Kidney (tissue), 22 donors: ENCODE measurements at regions of chr6 and their contacts with region 1.

Region 1: DNA sequence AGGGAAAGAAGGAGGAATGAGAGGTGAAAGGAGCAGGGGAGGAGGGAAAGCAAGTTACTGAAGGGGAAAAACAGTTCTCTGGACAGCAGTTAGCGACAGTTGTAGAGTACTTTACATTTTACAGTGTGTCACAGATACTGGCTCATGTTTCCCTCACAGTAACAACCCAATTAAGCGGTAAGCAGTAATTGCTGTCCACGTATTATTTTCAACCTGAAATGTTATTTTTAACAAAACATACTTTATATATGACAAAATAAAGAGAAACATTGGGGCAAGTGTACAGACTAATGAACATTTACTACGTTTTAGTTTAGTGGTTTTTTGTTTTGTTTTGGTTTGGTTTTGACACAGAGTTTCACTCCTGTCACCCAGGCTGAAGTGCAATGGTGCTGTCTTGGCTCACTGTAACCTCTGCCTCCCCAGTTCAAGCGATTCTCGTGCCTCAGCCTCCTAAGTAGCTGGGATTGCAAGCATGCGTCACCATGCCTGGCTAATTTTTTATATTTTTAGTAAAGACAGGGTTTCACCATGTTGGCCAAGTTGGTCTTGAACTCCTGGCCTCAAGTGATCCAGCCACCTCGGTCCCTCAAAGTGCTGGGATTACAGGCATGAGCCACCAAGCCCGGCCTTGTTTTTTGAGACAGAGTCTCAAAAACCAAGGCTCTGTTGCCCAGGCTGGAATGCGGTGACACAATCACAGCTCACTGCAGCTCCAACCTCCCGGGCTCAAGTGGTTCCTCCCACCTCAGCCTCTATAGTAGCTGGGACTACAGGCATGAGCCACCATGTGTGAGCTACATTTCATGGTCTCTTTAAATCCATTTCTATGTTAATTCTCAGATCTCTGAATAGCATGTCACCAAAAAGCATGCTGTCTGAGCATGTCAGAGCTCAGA is 22.6 kb upstream of the BTN3A2 start:
- DNase-seq: peak in 1 of 5 donors; percentile 48
- H3K4me3 ChIP-seq: peak overlapping the region in 1 of 3 donors; percentile 50
- H3K27ac ChIP-seq: no peak overlapping the region
- H3K4me1 ChIP-seq: peaks cover 0 to 4% (median 2%) of the 10 kb centered on the region in 3 donors
- H3K27me3 ChIP-seq: no peaks in the 10 kb centered on the region
- CTCF ChIP-seq: no peak

Region 2: DNA sequence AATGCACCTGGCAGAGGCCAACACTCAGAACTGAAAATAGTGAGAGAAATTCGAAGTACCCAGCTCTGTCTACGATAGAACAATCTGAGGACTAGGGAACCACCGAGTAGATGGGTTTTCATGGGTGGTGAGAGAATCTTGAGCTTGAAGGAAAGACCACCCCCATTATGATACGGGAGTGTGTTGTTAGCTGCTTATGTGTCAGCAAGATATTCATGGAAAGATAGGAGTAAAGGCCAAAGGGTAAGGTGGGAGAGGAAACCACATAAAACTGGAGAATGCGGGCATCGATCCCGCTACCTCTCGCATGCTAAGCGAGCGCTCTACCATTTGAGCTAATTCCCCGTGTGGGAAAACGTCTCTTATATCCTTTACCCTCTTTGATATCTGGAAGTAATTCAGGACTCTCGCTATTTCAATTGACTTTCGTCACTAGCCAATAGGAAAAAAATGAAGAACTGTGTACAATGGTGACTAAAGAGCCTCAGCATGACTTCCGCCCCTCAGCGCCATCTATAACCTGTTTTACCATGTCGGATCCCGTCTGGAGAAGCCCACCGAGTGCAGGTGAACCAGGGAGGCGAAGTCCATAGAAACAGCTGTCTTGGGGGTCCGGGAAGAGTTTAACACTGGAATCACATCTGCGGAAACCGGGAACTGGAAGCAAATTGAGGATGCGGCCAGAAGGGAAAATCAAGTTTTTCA is 229.4 kb after region 1 on chr6:
- intact Hi-C with region 1: loop called (anchors 10 kb)
- DNase-seq: peak in 4 of 5 donors; percentile 68 to 90 (median 82)
- H3K4me3 ChIP-seq: peak overlapping the region; percentile 63 to 74 (median 65)
- H3K27ac ChIP-seq: peak overlapping the region in 1 of 2 donors; percentile 52
- H3K4me1 ChIP-seq: no peaks in the 10 kb centered on the region
- H3K27me3 ChIP-seq: peaks cover 14% of the 10 kb centered on the region
- CTCF ChIP-seq: no peak